ENCODE measurements at regions of chr12 and their contacts with region 1.

Region 1: GRCh38 chr12:111942557-111942956 is 70.4 kb downstream of the TMEM116 start:
- DNase-seq: peak in 1 of 2 experiments; percentile 36
- H3K4me3 ChIP-seq: no peak overlapping the region
- H3K27ac ChIP-seq: no peak overlapping the region
- H3K4me1 ChIP-seq: no peaks in the 10 kb centered on the region
- H3K27me3 ChIP-seq: no peaks in the 10 kb centered on the region
- CTCF ChIP-seq: no peak

Region 2: GRCh38 chr12:111932241-111932640 is 10.3 kb before region 1 on chr12:
- CTCF ChIA-PET with region 1: no interaction called
- POLR2A ChIA-PET with region 1: no interaction called
- intact Hi-C with region 1: no loop called
- DNase-seq: no peak
- H3K4me3 ChIP-seq: no peak overlapping the region
- H3K27ac ChIP-seq: no peak overlapping the region
- H3K4me1 ChIP-seq: no peaks in the 10 kb centered on the region
- H3K27me3 ChIP-seq: no peaks in the 10 kb centered on the region
- CTCF ChIP-seq: no peak

Region 3: GRCh38 chr12:112012775-112013600 is 70.4 kb after region 1 on chr12 and contains the starts of genes ERP29 and TMEM116:
- CTCF ChIA-PET with region 1: no interaction called
- POLR2A ChIA-PET with region 1: interaction called, 10 read pairs
- intact Hi-C with region 1: loop called (anchors 2 kb)
- DNase-seq: peak; percentile 91 to 98
- H3K4me3 ChIP-seq: peak within 1 kb of the TSS; percentile 86
- H3K27ac ChIP-seq: peak within 1 kb of the TSS; percentile 88
- H3K4me1 ChIP-seq: peaks cover 36% of the 10 kb centered on the region
- H3K27me3 ChIP-seq: no peaks in the 10 kb centered on the region
- CTCF ChIP-seq: peak; percentile 68
- total RNA-seq, gene ERP29: 131 and 154 TPM in 2 replicates
- total RNA-seq, gene TMEM116: 21.9 and 23.4 TPM in 2 replicates

Region 4: DNA sequence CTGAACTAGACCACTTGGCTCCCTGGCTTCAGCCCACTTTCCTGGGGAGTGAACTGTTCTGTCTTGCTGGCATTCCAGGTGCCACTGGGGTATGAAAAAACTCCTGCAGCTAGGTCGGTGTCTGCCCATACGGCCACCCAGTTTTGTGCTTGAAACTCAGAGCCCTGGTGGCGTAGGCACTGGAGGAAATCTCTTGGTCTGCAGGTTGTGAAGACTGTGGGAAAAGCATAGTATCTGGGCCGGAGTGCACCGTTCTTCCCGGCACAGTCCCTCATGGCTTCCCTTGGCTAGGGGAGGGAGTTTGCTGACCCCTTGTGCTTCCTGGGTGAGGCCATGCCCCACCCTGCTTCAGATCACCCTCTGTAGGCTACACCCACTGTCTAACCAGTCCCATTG is 216.6 kb after region 1 on chr12:
- CTCF ChIA-PET with region 1: no interaction called
- POLR2A ChIA-PET with region 1: interaction called, 19 read pairs
- intact Hi-C with region 1: no loop called
- DNase-seq: no peak
- H3K4me3 ChIP-seq: no peak overlapping the region
- H3K27ac ChIP-seq: no peak overlapping the region
- H3K4me1 ChIP-seq: no peaks in the 10 kb centered on the region
- H3K27me3 ChIP-seq: no peaks in the 10 kb centered on the region
- CTCF ChIP-seq: no peak

Region 5: DNA sequence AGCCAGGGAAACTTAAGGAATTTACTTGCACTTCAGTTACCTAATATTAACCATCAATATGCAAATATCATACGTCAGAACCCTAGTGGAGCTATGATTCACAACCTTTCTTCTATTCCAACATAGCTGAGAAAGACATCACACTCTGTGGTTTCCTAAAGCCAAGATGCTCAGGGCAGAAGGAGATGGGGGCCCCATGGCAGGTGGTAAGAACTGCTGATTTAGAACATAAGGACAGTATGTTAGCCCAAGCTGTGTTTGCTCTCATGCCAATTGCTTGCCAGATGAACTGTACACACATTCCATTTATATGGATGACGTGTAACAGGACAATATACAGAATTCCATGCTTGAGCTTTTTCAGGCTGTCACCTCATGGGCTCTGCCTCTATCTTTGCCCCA is 405.0 kb after region 1 on chr12:
- CTCF ChIA-PET with region 1: no interaction called
- POLR2A ChIA-PET with region 1: no interaction called
- intact Hi-C with region 1: no loop called
- DNase-seq: no peak
- H3K4me3 ChIP-seq: no peak overlapping the region
- H3K27ac ChIP-seq: no peak overlapping the region
- H3K4me1 ChIP-seq: no peaks in the 10 kb centered on the region
- H3K27me3 ChIP-seq: no peaks in the 10 kb centered on the region
- CTCF ChIP-seq: no peak

Region 6: GRCh38 chr12:112393328-112393727 is 450.8 kb after region 1 on chr12:
- CTCF ChIA-PET with region 1: interaction called, 10 read pairs
- POLR2A ChIA-PET with region 1: no interaction called
- intact Hi-C with region 1: no loop called
- DNase-seq: no peak
- H3K4me3 ChIP-seq: no peak overlapping the region
- H3K27ac ChIP-seq: no peak overlapping the region
- H3K4me1 ChIP-seq: no peaks in the 10 kb centered on the region
- H3K27me3 ChIP-seq: no peaks in the 10 kb centered on the region
- CTCF ChIP-seq: no peak